MCF 10A (cell line): ENCODE measurements at regions of chr9 and their contacts with region 1.

Region 1: DNA sequence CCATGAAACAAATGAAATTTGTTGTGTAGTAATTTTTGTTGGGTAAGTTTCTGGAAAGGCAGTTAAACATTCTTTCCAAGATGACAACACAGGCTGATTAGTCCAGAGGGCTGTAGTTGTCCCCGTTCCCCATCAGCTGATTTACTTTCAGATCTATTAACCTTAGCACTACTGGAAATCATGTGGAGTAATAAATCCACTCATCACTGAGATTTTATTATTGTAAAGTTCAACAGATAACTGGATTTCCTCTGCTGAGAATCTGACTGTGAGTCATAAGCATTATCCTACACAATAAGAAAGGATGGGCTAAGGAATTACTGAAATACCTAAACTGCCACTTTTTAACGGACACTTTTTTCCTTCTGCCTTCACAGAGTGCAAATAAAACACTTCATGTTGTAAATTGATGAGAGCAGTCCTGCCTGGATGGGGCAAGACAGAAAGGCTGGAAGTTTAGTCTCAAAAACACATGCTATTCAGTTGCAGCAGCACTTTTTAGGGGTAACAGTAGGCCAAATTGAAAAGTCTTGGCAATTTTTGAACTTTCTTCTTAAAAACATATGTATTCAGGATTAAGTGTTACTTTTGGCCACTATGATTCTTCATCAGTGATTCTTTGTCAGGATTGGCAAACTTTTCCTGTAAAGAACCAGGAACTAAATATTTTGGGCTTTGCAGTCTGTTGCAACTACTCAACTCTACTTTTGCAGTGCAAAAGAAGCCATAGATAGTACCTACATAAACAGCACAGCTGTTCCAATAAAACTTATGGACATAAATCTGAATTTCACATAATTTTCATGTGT is 7.0 kb downstream of the STOM start:
- DNase-seq: peak; percentile 47
- H3K4me3 Mint-ChIP-seq: peak overlapping the region; percentile 54
- H3K27ac Mint-ChIP-seq: peak overlapping the region; percentile 66
- H3K4me1 Mint-ChIP-seq: peaks cover 50% of the 10 kb centered on the region
- H3K27me3 Mint-ChIP-seq: no peaks in the 10 kb centered on the region
- CTCF ChIP-seq: no peak

Region 2: GRCh38 chr9:121286973-121287741 is 75.9 kb before region 1 on chr9:
- CTCF ChIA-PET with region 1: interaction called, 3 read pairs
- POLR2A ChIA-PET with region 1: interaction called, 10 read pairs
- intact Hi-C with region 1: no loop called
- DNase-seq: peak; percentile 99
- H3K4me3 Mint-ChIP-seq: peak overlapping the region; percentile 32
- H3K27ac Mint-ChIP-seq: peak overlapping the region; percentile 80
- H3K4me1 Mint-ChIP-seq: peaks cover 70% of the 10 kb centered on the region
- H3K27me3 Mint-ChIP-seq: no peaks in the 10 kb centered on the region
- CTCF ChIP-seq: peak; percentile 14

Region 3: GRCh38 chr9:121333950-121334562 is 29.0 kb before region 1 on chr9:
- CTCF ChIA-PET with region 1: interaction called, 3 read pairs
- POLR2A ChIA-PET with region 1: interaction called, 10 read pairs
- intact Hi-C with region 1: no loop called
- DNase-seq: no peak
- H3K4me3 Mint-ChIP-seq: no peak overlapping the region
- H3K27ac Mint-ChIP-seq: peak overlapping the region; percentile 68
- H3K4me1 Mint-ChIP-seq: peaks cover 13% of the 10 kb centered on the region
- H3K27me3 Mint-ChIP-seq: no peaks in the 10 kb centered on the region
- CTCF ChIP-seq: no peak

Region 4: DNA sequence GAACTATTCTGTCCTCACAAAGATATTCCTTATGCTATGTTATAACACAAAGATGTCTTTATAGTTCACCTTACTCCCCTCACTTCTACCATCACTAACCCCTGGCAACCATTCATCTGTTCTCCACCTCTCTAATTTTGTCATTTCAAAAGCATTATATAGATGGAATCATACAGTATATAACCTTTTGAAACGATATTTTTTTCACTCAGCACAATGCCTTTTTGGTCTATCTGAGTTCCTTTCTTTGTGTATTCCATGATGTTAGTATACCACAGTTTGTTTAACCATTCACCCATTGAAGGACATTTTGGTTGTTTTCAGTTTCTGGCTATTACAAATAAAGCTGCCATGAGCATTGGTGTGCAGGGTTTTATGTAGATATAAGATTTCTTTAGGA is 42.9 kb after region 1 on chr9:
- CTCF ChIA-PET with region 1: no interaction called
- POLR2A ChIA-PET with region 1: no interaction called
- intact Hi-C with region 1: no loop called
- DNase-seq: no peak
- H3K4me3 Mint-ChIP-seq: no peak overlapping the region
- H3K27ac Mint-ChIP-seq: no peak overlapping the region
- H3K4me1 Mint-ChIP-seq: no peaks in the 10 kb centered on the region
- H3K27me3 Mint-ChIP-seq: no peaks in the 10 kb centered on the region
- CTCF ChIP-seq: no peak